ENCODE measurements at regions of chr13 and their contacts with region 1.

Region 1: GRCh38 chr13:51895906-51896888 is 34.4 kb downstream of the CCDC70 start:
- DNase-seq: peak; percentile 56
- ATAC-seq: peak; percentile 79
- H3K4me3 Mint-ChIP-seq: no peak overlapping the region
- H3K27ac Mint-ChIP-seq: no peak overlapping the region
- H3K4me1 Mint-ChIP-seq: no peaks in the 10 kb centered on the region
- H3K27me3 Mint-ChIP-seq: peaks cover 17% of the 10 kb centered on the region

Region 2: DNA sequence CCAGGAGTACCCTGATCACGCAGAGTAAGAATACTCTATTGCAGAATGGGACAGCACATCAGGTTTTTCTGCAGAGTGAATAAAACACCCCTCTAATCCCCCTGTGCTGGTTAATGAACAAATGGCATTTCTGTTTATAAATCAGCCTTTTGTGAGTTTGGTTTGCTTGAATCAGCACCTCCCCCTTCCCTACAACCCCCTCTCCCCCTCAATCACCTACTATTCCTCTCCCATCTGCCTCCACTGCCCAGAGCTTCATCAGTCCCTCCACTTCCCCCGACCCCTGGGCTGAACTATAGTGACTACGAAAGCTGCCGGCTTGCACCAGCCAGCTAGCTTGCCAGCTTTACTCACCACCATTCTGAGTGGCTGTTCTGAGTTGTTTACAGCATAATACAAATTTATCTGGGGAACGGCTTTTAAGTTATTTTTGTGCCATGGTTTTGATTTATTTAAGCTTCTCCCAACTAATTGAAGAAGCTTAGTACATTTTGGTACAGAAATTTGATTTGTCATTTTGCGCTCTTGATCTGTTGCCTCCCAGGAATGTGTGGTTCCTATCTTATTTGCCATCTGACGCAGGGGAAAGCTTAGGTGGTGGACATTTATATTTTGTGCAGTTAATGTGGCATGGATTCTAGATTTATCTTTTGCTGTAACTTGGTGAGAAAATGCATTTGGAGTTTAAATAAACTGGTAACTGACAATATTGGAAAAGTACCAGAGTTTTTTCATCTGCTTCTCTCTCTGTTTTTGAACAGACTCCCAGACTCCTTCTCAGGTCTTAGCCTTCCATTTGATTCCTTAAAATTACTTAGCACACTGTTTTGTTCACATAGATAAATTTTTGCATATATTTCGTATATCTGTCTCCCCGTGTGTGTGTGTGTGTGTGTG is 353.6 kb before region 1 on chr13:
- CTCF ChIA-PET with region 1: no interaction called
- POLR2A ChIA-PET with region 1: no interaction called
- DNase-seq: no peak
- ATAC-seq: no peak
- H3K4me3 Mint-ChIP-seq: no peak overlapping the region
- H3K27ac Mint-ChIP-seq: no peak overlapping the region
- H3K4me1 Mint-ChIP-seq: peaks cover 3% of the 10 kb centered on the region
- H3K27me3 Mint-ChIP-seq: peaks cover 13% of the 10 kb centered on the region

Region 3: DNA sequence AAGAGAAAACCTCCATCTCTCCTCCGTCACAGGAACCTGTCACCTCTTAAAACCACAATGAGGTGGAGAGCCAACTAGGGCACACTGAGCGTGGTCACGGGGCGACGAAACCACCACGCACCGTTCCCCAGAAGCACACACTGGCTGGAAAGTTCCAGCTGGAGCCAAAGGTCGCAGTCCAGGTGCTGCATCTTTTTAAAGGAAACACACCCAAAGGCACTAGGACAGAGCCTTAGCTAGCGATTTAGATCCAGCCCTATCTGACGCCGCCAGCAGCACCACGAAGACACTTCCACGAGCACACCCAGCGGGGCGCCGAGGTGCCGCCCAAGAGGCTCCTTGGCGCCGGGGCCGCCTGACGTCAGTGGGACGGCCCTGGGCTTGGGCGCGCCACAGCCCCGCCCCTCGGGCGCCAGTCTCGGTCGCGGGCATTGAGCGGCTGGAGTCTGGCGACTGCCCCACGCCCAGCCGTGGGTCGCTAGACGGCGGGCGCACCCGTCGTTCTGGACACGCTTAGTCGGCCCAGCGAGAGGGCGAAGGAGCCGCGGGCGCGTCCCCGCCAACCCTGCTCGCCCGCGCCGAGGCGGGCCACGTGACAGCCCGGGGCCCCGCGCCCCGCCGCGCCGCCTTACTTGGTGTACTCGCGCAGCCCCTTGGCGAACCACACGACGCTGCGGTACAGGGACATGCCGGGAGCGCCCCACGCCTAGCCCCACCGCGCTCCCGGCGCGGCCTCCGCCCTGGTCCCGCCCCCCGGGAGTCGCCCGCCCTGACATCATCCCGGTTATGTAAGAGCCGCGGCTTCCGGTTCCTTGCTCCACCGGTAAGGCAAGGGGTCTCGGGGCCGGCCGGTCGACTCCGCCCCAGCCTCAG is 92.5 kb before region 1 on chr13 and contains the start of gene DHRS12:
- CTCF ChIA-PET with region 1: no interaction called
- POLR2A ChIA-PET with region 1: no interaction called
- DNase-seq: peak; percentile 90
- ATAC-seq: peak; percentile 83
- H3K4me3 Mint-ChIP-seq: peak within 1 kb of the TSS; percentile 88
- H3K27ac Mint-ChIP-seq: peak within 1 kb of the TSS; percentile 99
- H3K4me1 Mint-ChIP-seq: peaks cover 37% of the 10 kb centered on the region
- H3K27me3 Mint-ChIP-seq: no peaks in the 10 kb centered on the region
- total RNA-seq, gene DHRS12: 8.9 to 10.0 TPM

Region 4: GRCh38 chr13:51978796-51979556 is 82.8 kb after region 1 on chr13:
- CTCF ChIA-PET with region 1: no interaction called
- POLR2A ChIA-PET with region 1: no interaction called
- DNase-seq: no peak
- ATAC-seq: no peak
- H3K4me3 Mint-ChIP-seq: no peak overlapping the region
- H3K27ac Mint-ChIP-seq: no peak overlapping the region
- H3K4me1 Mint-ChIP-seq: no peaks in the 10 kb centered on the region
- H3K27me3 Mint-ChIP-seq: no peaks in the 10 kb centered on the region

Region 5: GRCh38 chr13:52128714-52129700 is 232.8 kb after region 1 on chr13 and contains the start of gene NEK5:
- CTCF ChIA-PET with region 1: interaction called, 21 read pairs
- POLR2A ChIA-PET with region 1: no interaction called
- DNase-seq: peak; percentile 60
- ATAC-seq: peak; percentile 89
- H3K4me3 Mint-ChIP-seq: peak within 1 kb of the TSS; percentile 72
- H3K27ac Mint-ChIP-seq: no peak within 1 kb of the TSS
- H3K4me1 Mint-ChIP-seq: peaks cover 16% of the 10 kb centered on the region
- H3K27me3 Mint-ChIP-seq: peaks cover 17% of the 10 kb centered on the region
- total RNA-seq, gene NEK5: not detected

Measured in activated CD8-positive, alpha-beta T cell treated with anti-CD3 and anti-CD28 coated beads, Interleukin-2, amount 10 ng/mL, durations not matched to agents 7 days and 5 days (primary cell).